Cardiac septum (tissue), 1 donor: ENCODE measurements at regions of chr1 and their contacts with region 1.

Region 1: GRCh38 chr1:44405041-44405797 is at the start of gene RNF220:
- DNase-seq: no peak
- total RNA-seq, gene RNF220: 45.6 TPM

Region 2: DNA sequence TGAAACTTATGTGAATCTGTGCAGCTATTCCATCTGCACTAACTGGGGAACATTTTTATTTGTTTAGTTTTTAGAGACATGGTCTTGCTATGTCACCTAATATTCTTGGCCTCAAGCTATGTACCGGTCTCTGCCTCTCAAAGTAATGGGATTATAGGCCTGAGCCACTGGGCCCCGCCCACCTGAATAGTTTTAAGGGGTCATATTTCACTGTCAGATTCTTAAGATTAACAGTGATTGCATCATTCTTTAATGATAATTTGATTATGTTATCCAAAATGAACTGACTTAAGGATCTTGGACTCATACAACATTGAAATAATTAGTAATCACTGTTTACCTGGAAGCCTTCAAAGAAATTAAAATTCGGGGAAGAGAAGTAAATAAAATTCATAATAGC is 251.2 kb before region 1 on chr1:
- intact Hi-C with region 1: no loop called
- DNase-seq: no peak

Region 3: GRCh38 chr1:44361478-44361877 is 43.7 kb before region 1 on chr1:
- intact Hi-C with region 1: no loop called
- DNase-seq: no peak

Region 4: DNA sequence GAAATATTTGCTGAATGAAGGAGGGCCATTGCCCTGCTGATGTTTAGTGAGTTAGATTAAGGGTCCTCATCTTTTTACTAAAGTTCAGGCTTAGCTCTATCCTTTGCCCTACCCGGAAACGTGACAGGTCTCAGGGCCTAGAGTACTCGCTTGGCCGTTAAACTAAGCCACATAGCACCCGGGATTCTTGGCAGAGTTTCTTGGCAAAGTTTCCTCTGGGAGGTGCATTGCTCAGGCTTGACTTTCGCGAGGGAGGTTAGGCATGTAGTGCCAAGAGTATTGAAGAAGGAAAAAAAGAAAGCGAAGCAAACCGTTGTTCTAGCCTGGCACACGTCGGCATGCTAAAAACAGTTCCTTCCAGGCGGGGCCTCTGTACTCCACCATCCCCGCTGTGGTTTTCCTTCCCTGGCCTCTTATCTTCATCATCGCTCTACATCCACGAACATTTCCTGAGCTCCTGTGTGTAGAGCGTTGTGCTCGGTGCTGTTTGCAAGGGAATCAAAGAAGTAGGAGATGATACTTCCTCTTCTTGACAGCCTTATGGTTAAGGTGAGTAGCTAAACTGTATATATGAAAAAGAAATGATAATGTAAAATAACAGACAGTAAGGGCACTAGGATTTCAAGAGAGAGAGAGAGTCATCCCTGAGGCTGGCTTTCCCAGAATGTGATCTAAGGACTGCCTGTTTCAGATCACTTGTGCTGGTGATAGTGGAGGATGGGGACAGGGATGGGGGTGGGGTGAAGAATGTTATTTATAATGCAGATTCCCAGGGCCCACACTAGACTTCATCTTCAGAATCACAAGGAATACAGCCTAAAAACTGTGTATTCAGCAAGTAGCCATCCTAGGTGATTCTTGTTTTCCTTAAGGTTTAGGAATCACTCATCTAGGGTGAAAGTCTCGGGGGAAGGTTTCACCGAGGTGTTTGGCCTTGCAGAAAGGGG is 18.6 kb after region 1 on chr1:
- intact Hi-C with region 1: loop called (anchors 2 kb)
- DNase-seq: no peak

Region 5: DNA sequence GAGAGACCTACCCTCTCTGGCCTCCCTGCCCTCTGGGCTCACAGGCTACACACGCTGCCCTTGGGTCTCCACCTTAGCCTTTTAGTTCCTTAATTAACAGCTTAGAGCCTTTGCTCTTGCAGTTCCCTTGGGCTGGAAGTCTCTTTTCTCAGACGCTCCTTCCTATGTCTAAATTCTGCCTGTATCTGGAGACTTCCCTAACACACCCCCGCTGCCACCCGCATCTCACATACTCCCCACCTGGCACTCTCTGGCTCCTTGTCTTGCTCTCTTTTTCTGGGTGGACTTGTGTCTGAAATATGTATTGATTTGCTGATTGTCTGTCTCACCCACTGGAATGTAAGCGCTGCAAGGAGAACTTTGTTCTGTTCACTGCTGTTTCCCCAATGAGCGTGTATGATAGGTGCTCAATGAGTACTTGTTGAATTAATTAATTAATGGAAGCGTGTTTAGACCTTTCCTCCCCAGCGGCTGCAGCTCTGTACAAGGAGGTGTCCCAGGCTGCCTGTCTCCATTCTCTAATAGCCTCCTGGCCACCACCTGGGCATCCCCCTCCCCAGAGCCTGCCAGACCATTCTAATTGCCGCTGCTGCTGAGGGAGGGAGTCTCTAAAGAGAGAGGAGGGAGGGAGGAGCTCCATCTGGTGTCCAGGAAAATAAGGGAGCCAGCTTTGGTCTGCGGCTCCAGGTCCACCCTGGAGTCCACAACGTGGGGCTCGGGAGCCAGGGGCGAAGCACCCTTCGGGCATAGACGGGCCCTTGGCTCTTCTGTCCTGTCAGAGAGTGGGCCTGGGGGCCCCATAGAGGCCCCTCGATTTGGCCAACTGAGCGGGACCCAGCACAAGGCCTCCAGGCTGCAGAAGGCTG is 95.2 kb after region 1 on chr1:
- intact Hi-C with region 1: loop called (anchors 5 kb)
- DNase-seq: no peak

Region 6: GRCh38 chr1:44652445-44653106 is 247.4 kb after region 1 on chr1:
- intact Hi-C with region 1: loop called (anchors 10 kb)
- DNase-seq: peak; percentile 89